Breast epithelium (tissue), 4 donors: ENCODE measurements at regions of chr6 and their contacts with region 1.

Region 1: GRCh38 chr6:31597006-31597405 is 4.2 kb upstream of the NCR3 start:
- DNase-seq: no peak
- H3K4me3 ChIP-seq: no peak overlapping the region
- H3K27ac ChIP-seq: no peak overlapping the region
- H3K4me1 ChIP-seq: no peaks in the 10 kb centered on the region
- H3K27me3 ChIP-seq: no peaks in the 10 kb centered on the region
- CTCF ChIP-seq: peak in 1 of 3 donors; percentile 20
- POLR2A ChIP-seq: no peak

Region 2: GRCh38 chr6:31546962-31547726 is 49.9 kb before region 1 on chr6 and contains the start of gene NFKBIL1:
- intact Hi-C with region 1: loop called (anchors 5 kb)
- DNase-seq: peak; percentile 95
- H3K4me3 ChIP-seq: peak within 1 kb of the TSS; percentile 21 to 67 (median 50)
- H3K27ac ChIP-seq: peak within 1 kb of the TSS; percentile 75 to 84
- H3K4me1 ChIP-seq: peaks cover 0 to 11% of the 10 kb centered on the region in 2 donors
- H3K27me3 ChIP-seq: no peaks in the 10 kb centered on the region
- CTCF ChIP-seq: peak in 1 of 3 donors; percentile 9
- POLR2A ChIP-seq: peak; percentile 31
- total RNA-seq, gene NFKBIL1: 22.3 to 34.7 (median 26.5) TPM

Region 3: GRCh38 chr6:33469661-33470060 is 1872.7 kb after region 1 on chr6:
- intact Hi-C with region 1: loop called (anchors 5 kb)
- DNase-seq: no peak
- H3K4me3 ChIP-seq: no peak overlapping the region
- H3K27ac ChIP-seq: no peak overlapping the region
- H3K4me1 ChIP-seq: no peaks in the 10 kb centered on the region
- H3K27me3 ChIP-seq: no peaks in the 10 kb centered on the region
- CTCF ChIP-seq: no peak
- POLR2A ChIP-seq: no peak